Activated CD4-positive, alpha-beta memory T cell treated with anti-CD3 and anti-CD28 coated beads, Interleukin-2, amount 10 ng/mL, durations not matched to agents 7 days and 5 days (primary cell): ENCODE measurements at regions of chr4 and their contacts with region 1.

Region 1: GRCh38 chr4:15396157-15396800 is 31.6 kb upstream of the C1QTNF7 start:
- DNase-seq: peak; percentile 56
- H3K4me3 Mint-ChIP-seq: no peak overlapping the region
- H3K27ac Mint-ChIP-seq: no peak overlapping the region
- H3K4me1 Mint-ChIP-seq: peaks cover 11% of the 10 kb centered on the region
- H3K27me3 Mint-ChIP-seq: no peaks in the 10 kb centered on the region

Region 2: DNA sequence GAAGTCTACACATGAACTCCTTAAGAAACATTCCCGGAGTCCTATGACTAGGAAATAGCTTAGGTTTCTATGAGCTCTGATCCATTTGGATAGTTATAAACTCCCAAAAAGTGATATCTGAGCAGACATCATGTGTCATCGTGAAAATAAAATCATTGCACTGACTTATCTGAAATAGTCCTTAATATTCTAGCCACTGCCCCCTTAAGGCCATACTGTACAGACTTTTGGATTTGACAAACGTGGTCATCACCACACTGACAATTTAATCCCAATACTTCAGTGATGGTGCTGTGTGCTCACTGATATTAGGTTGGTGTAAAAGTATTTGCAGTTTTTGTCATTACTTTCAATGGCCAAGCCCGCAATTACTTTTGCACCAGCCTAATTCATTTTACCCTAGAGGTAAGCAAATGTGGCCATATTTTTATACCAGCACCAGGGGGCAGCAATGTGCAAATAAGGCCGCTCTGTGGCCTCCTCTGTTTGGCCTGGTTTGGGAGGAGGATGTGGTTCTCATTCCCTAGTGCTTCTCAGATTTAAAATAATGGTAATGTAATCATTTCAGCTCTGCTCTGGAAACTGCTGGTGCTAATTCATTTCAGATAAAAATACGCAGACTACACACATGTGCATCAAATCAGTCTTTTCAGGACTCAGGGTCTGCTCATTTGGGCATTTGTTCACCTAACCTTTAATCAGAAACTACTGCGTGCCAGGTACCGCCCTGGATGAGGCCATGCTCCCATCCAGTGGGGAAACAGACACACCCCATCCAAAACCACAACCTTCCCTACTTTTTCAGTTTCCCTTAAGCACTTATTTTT is 164.8 kb before region 1 on chr4:
- CTCF ChIA-PET with region 1: interaction called, 14 read pairs
- POLR2A ChIA-PET with region 1: no interaction called
- DNase-seq: peak; percentile 73
- H3K4me3 Mint-ChIP-seq: no peak overlapping the region
- H3K27ac Mint-ChIP-seq: no peak overlapping the region
- H3K4me1 Mint-ChIP-seq: peaks cover 24% of the 10 kb centered on the region
- H3K27me3 Mint-ChIP-seq: no peaks in the 10 kb centered on the region

Region 3: DNA sequence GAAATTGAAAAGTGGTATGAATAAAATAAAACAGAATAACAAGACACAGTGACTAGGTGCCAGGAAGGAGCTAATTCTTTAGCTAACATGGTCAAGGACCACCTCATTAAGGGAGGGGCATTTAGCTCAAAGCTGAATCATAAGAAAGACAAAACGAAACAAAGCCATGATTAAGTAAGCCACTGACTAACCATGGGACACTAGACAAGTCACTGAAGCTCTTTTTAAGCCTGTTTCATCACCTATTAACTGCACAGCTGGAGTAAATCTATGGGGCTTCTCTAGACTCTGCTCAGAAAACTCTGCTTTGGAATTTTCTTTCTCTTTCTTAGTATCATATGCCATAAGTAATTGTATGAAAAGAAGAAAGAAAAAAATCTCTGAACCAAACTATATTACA is 18.2 kb before region 1 on chr4:
- CTCF ChIA-PET with region 1: interaction called, 10 read pairs
- POLR2A ChIA-PET with region 1: no interaction called
- DNase-seq: no peak
- H3K4me3 Mint-ChIP-seq: no peak overlapping the region
- H3K27ac Mint-ChIP-seq: no peak overlapping the region
- H3K4me1 Mint-ChIP-seq: peaks cover 18% of the 10 kb centered on the region
- H3K27me3 Mint-ChIP-seq: peaks cover 6% of the 10 kb centered on the region